MCF 10A (cell line): ENCODE measurements at regions of chr11 and their contacts with region 1.

Region 1: DNA sequence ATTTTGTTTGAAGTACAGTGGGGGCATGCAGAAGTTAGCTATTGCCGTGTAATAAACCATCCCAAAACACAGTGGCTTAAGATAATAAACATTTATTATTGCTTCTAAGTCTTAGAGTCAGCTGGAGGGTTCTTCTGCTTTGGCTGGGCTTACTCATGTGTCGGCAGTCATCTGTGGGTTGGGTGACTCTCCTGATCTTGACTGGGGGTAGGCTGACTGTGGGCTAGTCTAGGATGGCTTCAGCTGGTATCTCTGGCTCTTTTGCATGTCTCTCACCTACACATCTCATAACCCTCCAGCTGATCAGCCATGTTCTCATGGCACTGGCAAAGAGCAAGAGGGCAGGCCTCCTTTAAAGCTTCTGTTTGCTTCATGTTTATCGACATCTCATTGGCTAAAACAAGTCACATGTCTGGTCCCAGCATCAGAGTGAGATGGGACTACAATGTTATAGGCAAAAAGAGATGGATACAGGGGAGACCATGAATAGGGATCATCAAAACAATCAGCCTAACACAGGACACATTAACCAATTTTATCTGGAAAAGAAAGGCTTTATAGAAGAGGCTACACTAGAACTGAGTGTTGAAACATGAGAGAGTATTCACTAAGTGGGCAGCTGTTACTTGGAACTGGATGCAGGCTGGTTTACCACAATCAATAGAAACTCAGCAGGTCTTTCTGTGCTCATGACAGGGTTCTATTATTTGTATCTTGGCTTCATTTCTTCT is 5.1 kb downstream of the LRRC51 start:
- DNase-seq: no peak
- H3K4me3 Mint-ChIP-seq: no peak overlapping the region
- H3K27ac Mint-ChIP-seq: no peak overlapping the region
- H3K4me1 Mint-ChIP-seq: peaks cover 23% of the 10 kb centered on the region
- H3K27me3 Mint-ChIP-seq: no peaks in the 10 kb centered on the region
- CTCF ChIP-seq: no peak

Region 2: DNA sequence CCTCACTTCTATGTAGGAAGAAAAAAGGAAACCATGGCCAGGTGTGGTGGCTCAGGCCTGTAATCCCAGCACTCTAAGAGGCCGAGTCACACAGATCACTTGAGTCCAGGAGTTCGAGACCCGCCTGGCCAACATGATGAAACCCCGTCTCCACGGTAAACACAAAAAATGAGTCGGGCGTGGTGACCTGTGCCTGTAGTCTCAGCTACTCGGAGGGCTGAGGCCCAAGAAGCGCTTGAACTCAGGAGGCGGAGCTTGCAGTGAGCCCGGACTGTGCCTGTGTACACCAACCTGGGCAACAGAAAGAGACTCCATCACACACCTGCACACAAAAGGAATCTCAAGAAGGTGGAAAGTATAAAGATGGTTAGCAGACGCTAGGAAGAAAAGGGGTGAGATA is 189.8 kb before region 1 on chr11:
- CTCF ChIA-PET with region 1: no interaction called
- POLR2A ChIA-PET with region 1: no interaction called
- intact Hi-C with region 1: no loop called
- DNase-seq: no peak
- H3K4me3 Mint-ChIP-seq: no peak overlapping the region
- H3K27ac Mint-ChIP-seq: no peak overlapping the region
- H3K4me1 Mint-ChIP-seq: no peaks in the 10 kb centered on the region
- H3K27me3 Mint-ChIP-seq: no peaks in the 10 kb centered on the region
- CTCF ChIP-seq: no peak

Region 3: GRCh38 chr11:72102946-72103753 is 17.4 kb after region 1 on chr11 and contains the start of gene LAMTOR1:
- CTCF ChIA-PET with region 1: interaction called, 34 read pairs
- POLR2A ChIA-PET with region 1: interaction called, 42 read pairs
- intact Hi-C with region 1: no loop called
- DNase-seq: peak; percentile 98
- H3K4me3 Mint-ChIP-seq: peak within 1 kb of the TSS; percentile 100
- H3K27ac Mint-ChIP-seq: peak within 1 kb of the TSS; percentile 100
- H3K4me1 Mint-ChIP-seq: peaks cover 43% of the 10 kb centered on the region
- H3K27me3 Mint-ChIP-seq: no peaks in the 10 kb centered on the region
- CTCF ChIP-seq: peak; percentile 29
- total RNA-seq, gene LAMTOR1: 76.9 and 82.4 TPM in 2 replicates